Pancreas (tissue), 10 donors: ENCODE measurements at regions of chr2 and their contacts with region 1.

Region 1: GRCh38 chr2:218395797-218396687 is 3.6 kb upstream of the CTDSP1 start:
- DNase-seq: peak; percentile 95 to 98 (median 96)
- ATAC-seq: peak; percentile 70 to 80 (median 72)
- H3K4me3 ChIP-seq: peak overlapping the region; percentile 36 to 98 (median 88)
- H3K27ac ChIP-seq: peak overlapping the region; percentile 95 to 100 (median 98)
- H3K4me1 ChIP-seq: peaks cover 4 to 14% (median 10%) of the 10 kb centered on the region in 3 donors
- H3K27me3 ChIP-seq: no peaks in the 10 kb centered on the region
- CTCF ChIP-seq: peak; percentile 86 to 96 (median 93)

Region 2: DNA sequence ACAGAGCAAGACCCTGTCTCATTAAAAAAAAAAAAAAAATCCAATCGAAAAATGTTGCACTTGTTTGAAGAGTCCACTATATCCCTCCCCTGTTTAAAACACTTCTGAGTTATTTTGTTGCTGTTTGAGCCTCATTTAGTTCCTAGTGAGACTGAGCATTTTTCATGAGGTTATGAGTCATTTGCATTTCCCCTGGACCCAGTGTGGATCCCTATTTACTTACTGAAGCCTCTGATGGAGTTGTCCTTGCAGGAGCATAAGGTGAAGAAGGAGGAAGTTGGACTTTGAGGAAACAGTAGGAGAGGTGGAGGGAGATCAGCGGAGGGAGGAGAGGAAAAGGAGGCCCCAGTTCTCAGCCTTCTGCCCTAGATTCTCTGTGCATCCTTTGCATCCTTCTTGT is 234.4 kb before region 1 on chr2:
- intact Hi-C with region 1: no loop called
- DNase-seq: no peak
- ATAC-seq: no peak
- H3K4me3 ChIP-seq: no peak overlapping the region
- H3K27ac ChIP-seq: no peak overlapping the region
- H3K4me1 ChIP-seq: no peaks in the 10 kb centered on the region
- H3K27me3 ChIP-seq: no peaks in the 10 kb centered on the region
- CTCF ChIP-seq: no peak

Region 3: GRCh38 chr2:218269899-218270720 is 125.9 kb before region 1 on chr2 and contains the starts of genes AAMP and PNKD:
- intact Hi-C with region 1: loop called in 2 of 3 experiments (anchors 5 to 10 kb)
- DNase-seq: peak; percentile 100
- ATAC-seq: peak; percentile 81 to 92 (median 87)
- H3K4me3 ChIP-seq: peak within 1 kb of the TSS; percentile 72 to 91 (median 78)
- H3K27ac ChIP-seq: peak within 1 kb of the TSS; percentile 6 to 71 (median 66)
- H3K4me1 ChIP-seq: peaks cover 8 to 37% (median 24%) of the 10 kb centered on the region in 3 donors
- H3K27me3 ChIP-seq: no peaks in the 10 kb centered on the region
- CTCF ChIP-seq: no peak
- total RNA-seq, gene AAMP: 34.0 to 51.8 (median 39.8) TPM
- total RNA-seq, gene PNKD: 17.2 to 32.2 (median 21.4) TPM

Region 4: GRCh38 chr2:218285604-218286003 is 110.4 kb before region 1 on chr2:
- intact Hi-C with region 1: no loop called
- DNase-seq: peak in 5 of 6 donors; percentile 71 to 87 (median 84)
- ATAC-seq: peak; percentile 31 to 52 (median 32)
- H3K4me3 ChIP-seq: peak overlapping the region in 1 of 4 donors; percentile 32
- H3K27ac ChIP-seq: peak overlapping the region; percentile 73 to 100 (median 88)
- H3K4me1 ChIP-seq: peaks cover 71 to 88% (median 83%) of the 10 kb centered on the region in 3 donors
- H3K27me3 ChIP-seq: no peaks in the 10 kb centered on the region
- CTCF ChIP-seq: no peak